ENCODE measurements at regions of chrX and their contacts with region 1.

Region 1: GRCh38 chrX:132615391-132616131 is 126.7 kb upstream of the MBNL3 start:
- DNase-seq: peak; percentile 21
- ATAC-seq: no peak

Region 2: DNA sequence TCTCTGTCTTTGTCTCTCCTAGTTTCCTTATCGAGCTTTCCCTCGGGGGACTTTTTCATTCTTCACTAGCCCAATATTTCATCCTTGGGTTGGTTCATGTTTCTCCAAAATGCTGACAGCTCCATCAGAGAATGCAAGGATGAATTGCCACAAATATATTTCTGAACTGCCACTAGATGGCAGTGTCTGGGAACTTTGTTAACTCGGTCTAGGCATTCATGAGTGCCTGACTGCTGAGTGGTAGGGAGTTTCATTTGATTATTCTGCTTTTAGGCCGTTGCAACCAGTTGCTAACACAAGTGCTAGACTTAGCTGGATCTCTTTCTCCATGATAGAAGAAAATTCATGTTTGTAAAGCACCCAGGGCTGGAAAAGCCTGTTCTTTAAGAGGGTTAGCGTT is 322.8 kb before region 1 on chrX:
- intact Hi-C with region 1: loop called (anchors 10 kb)
- DNase-seq: no peak
- ATAC-seq: peak; percentile 68

Region 3: GRCh38 chrX:132692066-132692465 is 76.5 kb after region 1 on chrX:
- intact Hi-C with region 1: no loop called
- DNase-seq: peak; percentile 13
- ATAC-seq: peak; percentile 60

Region 4: DNA sequence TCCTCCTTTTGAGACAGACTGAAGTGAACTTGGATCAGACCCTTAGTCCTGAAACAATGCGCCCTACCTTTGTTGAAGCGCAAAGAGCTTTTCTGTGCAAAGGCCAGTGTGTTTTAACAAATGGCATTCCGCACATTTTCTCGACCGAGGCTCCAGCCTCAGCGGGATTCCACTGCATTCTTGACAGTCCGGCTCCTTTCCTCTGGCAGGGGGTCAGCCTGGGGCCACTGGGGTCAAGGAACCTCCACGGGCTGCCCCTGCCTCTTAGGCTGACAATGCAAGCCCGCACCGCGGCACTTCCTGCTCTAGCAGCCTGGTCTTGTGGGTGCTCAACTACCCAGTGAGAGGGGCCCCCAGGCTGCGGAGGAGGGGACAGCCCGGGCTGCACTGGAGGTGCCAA is 649.8 kb after region 1 on chrX:
- intact Hi-C with region 1: no loop called
- DNase-seq: no peak
- ATAC-seq: no peak

Measured in left ventricle myocardium superior (tissue), 1 donor.